ENCODE measurements at regions of chr1 and their contacts with region 1.

Region 1: DNA sequence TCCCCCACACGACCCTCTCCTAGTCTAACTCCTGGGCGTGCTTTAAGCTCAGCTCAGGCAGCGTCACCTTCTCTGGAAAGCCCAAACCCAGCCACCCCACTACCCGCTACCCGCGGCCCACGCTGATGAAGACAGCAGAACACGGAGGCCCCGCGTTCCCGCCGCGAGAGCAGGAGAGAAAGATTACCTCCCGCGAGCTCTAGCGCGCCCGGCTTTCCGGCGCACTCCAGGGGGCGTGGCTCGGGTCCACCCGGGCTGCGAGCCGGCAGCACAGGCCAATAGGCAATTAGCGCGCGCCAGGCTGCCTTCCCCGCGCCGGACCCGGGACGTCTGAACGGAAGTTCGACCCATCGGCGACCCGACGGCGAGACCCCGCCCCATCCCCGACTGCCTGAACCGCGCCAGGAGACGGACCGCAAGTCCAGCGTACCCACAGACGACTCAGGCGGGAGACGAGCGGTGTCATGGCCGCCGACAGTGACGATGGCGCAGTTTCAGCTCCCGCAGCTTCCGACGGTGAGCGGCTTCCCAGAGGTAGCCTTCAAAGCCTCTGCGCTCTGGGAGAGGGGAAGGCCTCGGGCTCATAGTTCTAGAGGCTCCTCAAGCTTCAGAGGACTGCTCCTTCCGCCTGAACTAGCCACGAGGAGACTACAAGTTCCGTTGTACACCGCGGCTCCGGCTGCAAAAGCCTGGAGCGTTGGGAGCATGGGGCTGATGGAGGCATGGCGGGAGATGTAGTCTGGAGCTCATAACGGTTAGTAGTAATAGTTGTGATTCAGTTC is at the starts of genes MUTYH and TOE1:
- DNase-seq: peak; percentile 96
- H3K4me3 Mint-ChIP-seq: peak within 1 kb of the TSS; percentile 96
- H3K27ac Mint-ChIP-seq: peak within 1 kb of the TSS; percentile 100
- H3K4me1 Mint-ChIP-seq: peaks cover 58% of the 10 kb centered on the region
- H3K27me3 Mint-ChIP-seq: no peaks in the 10 kb centered on the region
- total RNA-seq, gene MUTYH: 37.2 to 39.2 TPM
- total RNA-seq, gene TOE1: 16.6 to 18.3 TPM

Region 2: DNA sequence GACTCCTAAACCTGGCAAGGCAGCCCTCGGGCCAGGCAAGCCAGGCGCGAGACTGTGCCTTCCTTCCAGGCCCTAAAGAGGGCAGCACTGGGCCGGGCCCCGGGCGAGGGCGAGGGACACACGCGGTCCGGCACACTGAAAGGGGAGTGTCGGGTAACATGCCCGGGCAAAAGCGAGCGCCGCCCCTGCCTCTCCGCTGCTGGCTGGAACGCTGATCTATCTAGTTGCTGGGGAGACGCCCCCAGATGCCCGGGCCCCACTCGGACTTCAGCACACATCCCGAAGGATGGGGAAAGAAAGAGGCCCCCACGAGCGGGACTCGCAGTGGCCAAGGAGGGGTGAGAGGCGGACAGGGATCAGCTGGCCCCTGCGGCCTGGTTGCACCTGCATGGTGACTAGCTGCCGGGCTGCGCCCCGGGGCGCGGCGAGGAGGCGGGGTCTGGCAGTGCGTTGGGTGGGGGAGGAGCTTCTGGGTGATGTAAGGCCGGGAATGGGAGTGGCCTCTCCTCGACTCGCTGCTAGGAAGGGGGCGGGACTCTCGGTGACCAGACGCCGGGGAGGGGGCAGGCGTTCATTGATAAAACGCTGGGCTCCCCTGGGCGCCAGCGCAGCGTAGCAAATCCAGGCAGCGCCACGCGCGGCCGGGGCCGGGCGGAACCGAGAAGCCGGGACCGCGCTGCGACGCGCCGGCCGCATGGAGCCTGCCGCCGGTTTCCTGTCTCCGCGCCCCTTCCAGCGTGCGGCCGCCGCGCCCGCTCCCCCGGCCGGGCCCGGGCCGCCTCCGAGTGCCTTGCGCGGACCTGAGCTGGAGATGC is 540.0 kb before region 1 on chr1 and contains the start of gene PLK3:
- CTCF ChIA-PET with region 1: interaction called, 3 read pairs
- POLR2A ChIA-PET with region 1: interaction called, 12 read pairs
- DNase-seq: peak; percentile 98
- H3K4me3 Mint-ChIP-seq: peak within 1 kb of the TSS; percentile 90
- H3K27ac Mint-ChIP-seq: peak within 1 kb of the TSS; percentile 98
- H3K4me1 Mint-ChIP-seq: peaks cover 47% of the 10 kb centered on the region
- H3K27me3 Mint-ChIP-seq: no peaks in the 10 kb centered on the region
- total RNA-seq, gene PLK3: 62.8 to 63.5 TPM

Region 3: GRCh38 chr1:44985747-44986359 is 354.1 kb before region 1 on chr1:
- CTCF ChIA-PET with region 1: no interaction called
- POLR2A ChIA-PET with region 1: interaction called, 15 read pairs
- DNase-seq: no peak
- H3K4me3 Mint-ChIP-seq: peak overlapping the region; percentile 90
- H3K27ac Mint-ChIP-seq: peak overlapping the region; percentile 86
- H3K4me1 Mint-ChIP-seq: peaks cover 28% of the 10 kb centered on the region
- H3K27me3 Mint-ChIP-seq: peaks cover 2% of the 10 kb centered on the region

Region 4: DNA sequence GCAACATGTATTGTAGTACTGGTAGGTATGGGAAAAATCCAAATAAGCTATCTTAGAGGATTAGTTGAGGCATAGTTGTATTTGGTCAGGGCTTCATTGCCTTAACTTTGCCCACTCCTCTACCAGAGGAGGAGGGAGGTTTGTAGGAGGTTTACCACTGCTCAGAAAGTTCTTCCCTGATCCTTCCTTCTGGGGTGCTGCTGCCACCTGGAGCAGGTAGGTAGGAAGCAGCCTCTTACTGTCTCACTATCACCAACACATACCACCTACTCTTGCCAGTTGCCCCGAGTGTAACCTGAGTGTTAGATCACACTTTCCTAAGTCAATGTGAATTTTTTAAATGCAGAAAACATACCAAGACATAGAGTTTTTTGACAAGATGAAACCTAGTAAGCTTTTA is 109.4 kb before region 1 on chr1:
- CTCF ChIA-PET with region 1: no interaction called
- POLR2A ChIA-PET with region 1: no interaction called
- DNase-seq: no peak
- H3K4me3 Mint-ChIP-seq: no peak overlapping the region
- H3K27ac Mint-ChIP-seq: no peak overlapping the region
- H3K4me1 Mint-ChIP-seq: no peaks in the 10 kb centered on the region
- H3K27me3 Mint-ChIP-seq: no peaks in the 10 kb centered on the region

Region 5: GRCh38 chr1:45326627-45327623 is 13.1 kb before region 1 on chr1 and contains the start of gene HPDL:
- CTCF ChIA-PET with region 1: interaction called, 16 read pairs
- POLR2A ChIA-PET with region 1: interaction called, 143 read pairs
- DNase-seq: peak; percentile 64
- H3K4me3 Mint-ChIP-seq: peak within 1 kb of the TSS; percentile 74
- H3K27ac Mint-ChIP-seq: peak within 1 kb of the TSS; percentile 16
- H3K4me1 Mint-ChIP-seq: peaks cover 25% of the 10 kb centered on the region
- H3K27me3 Mint-ChIP-seq: no peaks in the 10 kb centered on the region
- total RNA-seq, gene HPDL: 5.5 to 5.6 TPM

Region 6: GRCh38 chr1:45499415-45499769 is 159.4 kb after region 1 on chr1:
- CTCF ChIA-PET with region 1: interaction called, 12 read pairs
- POLR2A ChIA-PET with region 1: interaction called, 71 read pairs
- DNase-seq: peak; percentile 40
- H3K4me3 Mint-ChIP-seq: peak overlapping the region; percentile 88
- H3K27ac Mint-ChIP-seq: peak overlapping the region; percentile 77
- H3K4me1 Mint-ChIP-seq: peaks cover 36% of the 10 kb centered on the region
- H3K27me3 Mint-ChIP-seq: no peaks in the 10 kb centered on the region

Measured in activated CD4-positive, alpha-beta memory T cell treated with anti-CD3 and anti-CD28 coated beads, Interleukin-2, amount 10 ng/mL, durations not matched to agents 7 days and 5 days (primary cell).